ENCODE measurements at regions of chr13 and their contacts with region 1.

Region 1: DNA sequence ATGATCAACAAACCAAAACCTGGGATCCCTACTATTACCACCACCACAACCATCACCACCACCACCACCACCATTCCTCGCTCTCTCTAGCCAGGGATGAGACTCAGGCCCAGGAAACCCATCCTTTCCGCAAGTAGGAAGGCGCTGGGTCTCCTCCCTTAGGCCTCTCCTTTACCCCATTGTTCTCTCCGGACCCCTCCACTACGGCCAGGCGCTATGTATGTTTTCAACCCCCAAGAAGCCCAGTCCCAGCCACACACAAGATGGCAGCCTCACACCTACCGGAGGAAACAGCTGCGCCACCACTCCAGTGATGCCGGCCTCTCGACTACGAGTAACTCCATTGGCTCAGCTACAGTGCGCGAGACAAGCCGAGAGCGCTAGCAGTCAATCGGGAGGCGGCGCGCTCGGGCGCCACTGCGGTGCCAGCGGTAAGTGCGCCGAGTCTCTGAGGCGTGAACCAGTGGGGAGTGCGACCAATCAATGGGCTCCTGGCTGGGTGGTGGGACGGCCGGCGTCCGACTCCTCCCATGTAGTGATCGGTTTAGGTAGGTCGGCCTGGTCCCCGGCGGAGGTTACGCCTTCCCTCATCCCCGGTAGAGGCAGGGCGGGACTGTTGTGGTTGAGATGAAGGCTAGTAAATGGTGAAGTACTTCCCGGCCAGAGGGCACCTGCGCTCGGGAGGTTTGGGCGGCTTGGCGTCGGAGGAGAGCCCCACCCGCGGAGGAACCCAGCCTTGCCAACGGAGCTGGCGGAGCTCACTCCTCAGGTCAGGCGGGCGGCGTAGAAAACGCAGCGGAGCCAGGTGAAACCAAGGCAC is at the starts of genes CAB39L and SETDB2:
- DNase-seq: peak; percentile 99
- H3K4me3 Mint-ChIP-seq: peak within 1 kb of the TSS; percentile 92
- H3K27ac Mint-ChIP-seq: peak within 1 kb of the TSS; percentile 96
- H3K4me1 Mint-ChIP-seq: peaks cover 56% of the 10 kb centered on the region
- H3K27me3 Mint-ChIP-seq: no peaks in the 10 kb centered on the region
- total RNA-seq, gene CAB39L: 3.8 to 4.5 TPM
- total RNA-seq, gene SETDB2: 15.8 to 16.2 TPM

Region 2: GRCh38 chr13:48412881-48413351 is 1031.0 kb before region 1 on chr13 and contains the start of gene LPAR6:
- CTCF ChIA-PET with region 1: no interaction called
- intact Hi-C with region 1: loop called (anchors 10 kb)
- DNase-seq: peak; percentile 20
- H3K4me3 Mint-ChIP-seq: peak within 1 kb of the TSS; percentile 84
- H3K27ac Mint-ChIP-seq: peak within 1 kb of the TSS; percentile 92
- H3K4me1 Mint-ChIP-seq: peaks cover 33% of the 10 kb centered on the region
- H3K27me3 Mint-ChIP-seq: no peaks in the 10 kb centered on the region
- total RNA-seq, gene LPAR6: 6.1 to 6.6 TPM

Region 3: GRCh38 chr13:48975856-48976575 is 467.9 kb before region 1 on chr13 and contains the start of gene FNDC3A:
- CTCF ChIA-PET with region 1: no interaction called
- intact Hi-C with region 1: loop called (anchors 2 kb)
- DNase-seq: peak; percentile 89
- H3K4me3 Mint-ChIP-seq: peak within 1 kb of the TSS; percentile 96
- H3K27ac Mint-ChIP-seq: peak within 1 kb of the TSS; percentile 98
- H3K4me1 Mint-ChIP-seq: peaks cover 31% of the 10 kb centered on the region
- H3K27me3 Mint-ChIP-seq: peaks cover 4% of the 10 kb centered on the region
- total RNA-seq, gene FNDC3A: 17.1 to 18.3 TPM

Region 4: DNA sequence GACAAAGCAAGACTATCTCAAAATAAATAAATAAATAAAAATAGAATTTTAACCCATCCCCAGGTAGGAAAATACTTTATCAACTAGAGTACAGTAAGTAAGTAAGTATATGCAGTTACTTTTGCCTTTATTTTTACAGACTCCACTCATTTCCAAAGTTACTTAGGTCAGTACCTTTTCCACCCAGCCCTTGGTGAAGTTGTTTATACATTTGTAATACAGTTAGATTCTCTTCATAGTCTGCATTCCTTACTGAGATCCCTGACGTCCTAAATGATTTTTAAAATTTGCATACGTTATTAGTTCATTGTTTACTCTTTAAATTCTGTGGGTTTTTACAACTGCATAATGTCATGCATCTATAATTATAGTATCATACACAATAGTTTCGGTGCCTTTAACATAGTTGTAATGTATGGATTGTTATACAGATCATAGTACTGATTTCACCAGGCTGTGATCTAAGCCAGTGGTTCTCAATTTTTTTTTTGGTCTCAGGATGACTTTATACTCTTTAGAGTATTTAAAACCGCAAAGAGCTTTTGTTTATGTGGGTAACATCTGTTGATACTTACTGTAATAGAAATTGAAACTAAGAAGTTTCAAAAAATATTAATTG is 10.6 kb after region 1 on chr13:
- CTCF ChIA-PET with region 1: interaction called, 3 read pairs
- intact Hi-C with region 1: loop called (anchors 1 kb)
- DNase-seq: no peak
- H3K4me3 Mint-ChIP-seq: no peak overlapping the region
- H3K27ac Mint-ChIP-seq: no peak overlapping the region
- H3K4me1 Mint-ChIP-seq: peaks cover 20% of the 10 kb centered on the region
- H3K27me3 Mint-ChIP-seq: no peaks in the 10 kb centered on the region

Region 5: GRCh38 chr13:49585220-49586157 is 141.6 kb after region 1 on chr13 and contains the start of gene RCBTB1:
- CTCF ChIA-PET with region 1: interaction called, 4 read pairs
- intact Hi-C with region 1: loop called (anchors 1 kb)
- DNase-seq: peak; percentile 56
- H3K4me3 Mint-ChIP-seq: peak within 1 kb of the TSS; percentile 88
- H3K27ac Mint-ChIP-seq: peak within 1 kb of the TSS; percentile 61
- H3K4me1 Mint-ChIP-seq: peaks cover 25% of the 10 kb centered on the region
- H3K27me3 Mint-ChIP-seq: no peaks in the 10 kb centered on the region
- total RNA-seq, gene RCBTB1: 17.8 to 19.2 TPM

Region 6: GRCh38 chr13:49792550-49793324 is 348.8 kb after region 1 on chr13 and contains the start of gene KPNA3:
- CTCF ChIA-PET with region 1: no interaction called
- intact Hi-C with region 1: loop called (anchors 1 kb)
- DNase-seq: peak; percentile 96
- H3K4me3 Mint-ChIP-seq: peak within 1 kb of the TSS; percentile 92
- H3K27ac Mint-ChIP-seq: peak within 1 kb of the TSS; percentile 94
- H3K4me1 Mint-ChIP-seq: peaks cover 29% of the 10 kb centered on the region
- H3K27me3 Mint-ChIP-seq: peaks cover 4% of the 10 kb centered on the region
- total RNA-seq, gene KPNA3: 47.9 to 50.7 TPM

Region 7: DNA sequence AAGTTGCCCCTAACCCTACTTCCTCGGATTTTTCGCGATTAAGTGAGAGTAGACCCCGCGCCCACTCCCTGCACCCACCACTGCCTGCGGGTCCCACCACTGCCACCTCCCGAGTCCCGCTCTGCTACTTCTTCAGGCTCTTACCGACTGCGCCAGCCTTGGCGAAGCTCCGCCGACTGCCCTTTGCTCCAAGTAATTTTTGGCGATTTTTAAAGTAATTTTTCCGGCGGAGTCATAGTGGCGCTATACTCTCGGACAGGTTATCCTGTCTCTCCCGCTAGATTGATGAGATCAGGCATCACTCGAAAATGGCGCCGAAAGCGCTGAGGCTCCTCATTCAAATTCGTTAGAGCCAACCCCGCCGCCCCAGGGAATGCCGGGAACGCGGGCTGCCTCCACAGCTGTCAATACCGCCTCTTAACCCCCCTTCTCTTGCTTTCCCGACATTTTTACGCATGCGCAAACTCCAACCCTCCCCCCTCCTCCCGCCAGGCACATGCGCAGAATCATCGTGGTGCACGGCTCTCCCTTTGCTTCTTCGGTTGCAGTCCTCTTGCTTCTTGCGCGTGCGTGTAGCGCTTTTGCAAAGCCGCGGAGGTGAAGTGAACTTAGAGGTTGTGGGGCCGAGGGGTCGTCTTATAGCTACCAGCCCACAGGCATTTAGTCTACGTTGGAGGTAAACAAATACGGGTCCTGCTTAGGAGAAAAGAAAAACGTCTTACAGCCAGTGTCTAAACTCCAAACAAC is 637.9 kb after region 1 on chr13:
- CTCF ChIA-PET with region 1: no interaction called
- intact Hi-C with region 1: loop called (anchors 1 kb)
- DNase-seq: peak; percentile 99
- H3K4me3 Mint-ChIP-seq: peak overlapping the region; percentile 100
- H3K27ac Mint-ChIP-seq: peak overlapping the region; percentile 100
- H3K4me1 Mint-ChIP-seq: peaks cover 27% of the 10 kb centered on the region
- H3K27me3 Mint-ChIP-seq: peaks cover 15% of the 10 kb centered on the region

Measured in activated naive CD4-positive, alpha-beta T cell treated with anti-CD3 and anti-CD28 coated beads for 36 hours (primary cell).